CD4-positive, alpha-beta T cell (primary cell): ENCODE measurements at regions of chr2 and their contacts with region 1.

Region 1: GRCh38 chr2:69643602-69644505 is at the start of gene AAK1:
- DNase-seq: peak; percentile 64 to 91 (median 78)
- ATAC-seq: peak; percentile 40
- H3K4me3 ChIP-seq: peak within 1 kb of the TSS; percentile 85
- H3K4me3 Mint-ChIP-seq: peak within 1 kb of the TSS; percentile 99
- H3K27ac ChIP-seq: peak within 1 kb of the TSS; percentile 87 to 90
- H3K27ac Mint-ChIP-seq: peak within 1 kb of the TSS; percentile 95
- H3K4me1 ChIP-seq: peaks cover 56% of the 10 kb centered on the region
- H3K4me1 Mint-ChIP-seq: peaks cover 67% of the 10 kb centered on the region
- H3K27me3 ChIP-seq: no peaks in the 10 kb centered on the region
- H3K27me3 Mint-ChIP-seq: no peaks in the 10 kb centered on the region
- CTCF ChIP-seq: no peak
- total RNA-seq, gene AAK1: 201 to 208 TPM

Region 2: GRCh38 chr2:69306822-69307578 is 336.9 kb before region 1 on chr2:
- CTCF ChIA-PET with region 1: no interaction called
- POLR2A ChIA-PET with region 1: no interaction called
- intact Hi-C with region 1: no loop called
- DNase-seq: peak; percentile 30 to 74 (median 46)
- ATAC-seq: peak; percentile 81
- H3K4me3 ChIP-seq: peak overlapping the region; percentile 56
- H3K4me3 Mint-ChIP-seq: peak overlapping the region; percentile 58
- H3K27ac ChIP-seq: no peak overlapping the region
- H3K27ac Mint-ChIP-seq: no peak overlapping the region
- H3K4me1 ChIP-seq: peaks cover 31% of the 10 kb centered on the region
- H3K4me1 Mint-ChIP-seq: peaks cover 31% of the 10 kb centered on the region
- H3K27me3 ChIP-seq: peaks cover 18 to 29% of the 10 kb centered on the region in 2 experiments
- H3K27me3 Mint-ChIP-seq: peaks cover 32% of the 10 kb centered on the region
- CTCF ChIP-seq: peak; percentile 79

Region 3: DNA sequence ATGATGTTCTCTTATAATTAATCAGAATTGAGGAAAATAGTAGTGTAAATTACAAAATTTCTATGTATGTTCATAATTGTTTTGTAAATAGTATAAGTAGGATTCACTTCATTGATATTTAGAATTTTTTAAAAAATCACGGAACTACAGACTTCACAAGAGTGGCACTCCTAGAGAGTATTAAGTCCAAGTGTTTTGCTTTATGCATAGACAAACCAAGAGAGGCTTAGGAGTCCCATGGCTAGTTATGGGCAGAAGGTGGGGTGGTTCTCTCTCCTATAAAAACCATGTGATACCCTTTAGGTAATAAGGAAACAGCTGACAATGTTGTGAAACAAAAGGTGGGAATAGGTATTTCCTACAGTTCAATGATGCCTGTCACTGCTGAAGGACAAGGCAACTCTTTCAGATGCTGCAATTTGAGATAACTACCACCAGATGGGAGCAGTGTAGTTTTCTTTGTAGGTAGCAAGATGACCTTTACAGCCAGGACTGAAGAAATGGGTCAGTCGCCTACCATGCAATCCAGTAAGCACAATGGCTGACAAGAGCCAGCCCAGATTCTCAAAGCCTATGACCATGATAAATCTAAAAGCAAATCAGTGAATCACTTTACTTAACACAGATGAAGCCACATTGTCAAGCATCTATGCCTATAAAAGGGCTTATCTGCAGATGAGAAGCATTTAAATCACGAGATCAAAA is 84.3 kb before region 1 on chr2:
- CTCF ChIA-PET with region 1: interaction called, 19 read pairs
- POLR2A ChIA-PET with region 1: interaction called, 29 read pairs
- intact Hi-C with region 1: loop called (anchors 2 to 5 kb)
- DNase-seq: peak in 3 of 14 experiments; percentile 51 to 66 (median 65)
- ATAC-seq: peak; percentile 58
- H3K4me3 ChIP-seq: no peak overlapping the region
- H3K4me3 Mint-ChIP-seq: peak overlapping the region; percentile 30
- H3K27ac ChIP-seq: no peak overlapping the region
- H3K27ac Mint-ChIP-seq: peak overlapping the region; percentile 69
- H3K4me1 ChIP-seq: peaks cover 57% of the 10 kb centered on the region
- H3K4me1 Mint-ChIP-seq: peaks cover 91% of the 10 kb centered on the region
- H3K27me3 ChIP-seq: no peaks in the 10 kb centered on the region
- H3K27me3 Mint-ChIP-seq: no peaks in the 10 kb centered on the region
- CTCF ChIP-seq: peak; percentile 75

Region 4: GRCh38 chr2:69601179-69601612 is 42.7 kb before region 1 on chr2:
- CTCF ChIA-PET with region 1: interaction called, 3 read pairs
- POLR2A ChIA-PET with region 1: interaction called, 11 read pairs
- intact Hi-C with region 1: loop called in 1 of 2 experiments (anchors 5 kb)
- DNase-seq: no peak
- ATAC-seq: peak; percentile 58
- H3K4me3 ChIP-seq: no peak overlapping the region
- H3K4me3 Mint-ChIP-seq: peak overlapping the region; percentile 30
- H3K27ac ChIP-seq: no peak overlapping the region
- H3K27ac Mint-ChIP-seq: peak overlapping the region; percentile 78
- H3K4me1 ChIP-seq: peaks cover 50% of the 10 kb centered on the region
- H3K4me1 Mint-ChIP-seq: peaks cover 95% of the 10 kb centered on the region
- H3K27me3 ChIP-seq: no peaks in the 10 kb centered on the region
- H3K27me3 Mint-ChIP-seq: no peaks in the 10 kb centered on the region
- CTCF ChIP-seq: no peak

Region 5: DNA sequence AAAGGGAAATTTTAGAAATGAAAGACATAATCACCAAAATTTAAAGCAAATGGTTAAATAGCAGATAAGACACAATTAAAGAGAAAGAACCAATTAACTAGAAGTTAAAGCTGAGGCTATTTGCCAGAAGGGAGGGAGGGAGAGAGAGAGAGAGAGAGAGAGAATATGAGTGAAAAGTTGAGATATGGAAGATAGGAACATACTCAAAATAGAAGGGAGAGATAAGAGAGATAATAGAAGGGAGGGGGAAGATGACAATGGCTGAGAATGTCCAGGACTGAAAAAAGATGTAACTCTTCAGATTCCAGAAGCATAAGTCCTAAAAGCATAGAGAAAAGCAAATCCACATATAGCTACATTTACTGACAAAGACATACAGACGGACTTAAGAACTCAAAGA is 16.8 kb after region 1 on chr2:
- CTCF ChIA-PET with region 1: no interaction called
- POLR2A ChIA-PET with region 1: interaction called, 23 read pairs
- intact Hi-C with region 1: no loop called
- DNase-seq: no peak
- ATAC-seq: no peak
- H3K4me3 ChIP-seq: no peak overlapping the region
- H3K4me3 Mint-ChIP-seq: no peak overlapping the region
- H3K27ac ChIP-seq: no peak overlapping the region
- H3K27ac Mint-ChIP-seq: no peak overlapping the region
- H3K4me1 ChIP-seq: peaks cover 3% of the 10 kb centered on the region
- H3K4me1 Mint-ChIP-seq: peaks cover 20% of the 10 kb centered on the region
- H3K27me3 ChIP-seq: no peaks in the 10 kb centered on the region
- H3K27me3 Mint-ChIP-seq: no peaks in the 10 kb centered on the region
- CTCF ChIP-seq: no peak

Region 6: DNA sequence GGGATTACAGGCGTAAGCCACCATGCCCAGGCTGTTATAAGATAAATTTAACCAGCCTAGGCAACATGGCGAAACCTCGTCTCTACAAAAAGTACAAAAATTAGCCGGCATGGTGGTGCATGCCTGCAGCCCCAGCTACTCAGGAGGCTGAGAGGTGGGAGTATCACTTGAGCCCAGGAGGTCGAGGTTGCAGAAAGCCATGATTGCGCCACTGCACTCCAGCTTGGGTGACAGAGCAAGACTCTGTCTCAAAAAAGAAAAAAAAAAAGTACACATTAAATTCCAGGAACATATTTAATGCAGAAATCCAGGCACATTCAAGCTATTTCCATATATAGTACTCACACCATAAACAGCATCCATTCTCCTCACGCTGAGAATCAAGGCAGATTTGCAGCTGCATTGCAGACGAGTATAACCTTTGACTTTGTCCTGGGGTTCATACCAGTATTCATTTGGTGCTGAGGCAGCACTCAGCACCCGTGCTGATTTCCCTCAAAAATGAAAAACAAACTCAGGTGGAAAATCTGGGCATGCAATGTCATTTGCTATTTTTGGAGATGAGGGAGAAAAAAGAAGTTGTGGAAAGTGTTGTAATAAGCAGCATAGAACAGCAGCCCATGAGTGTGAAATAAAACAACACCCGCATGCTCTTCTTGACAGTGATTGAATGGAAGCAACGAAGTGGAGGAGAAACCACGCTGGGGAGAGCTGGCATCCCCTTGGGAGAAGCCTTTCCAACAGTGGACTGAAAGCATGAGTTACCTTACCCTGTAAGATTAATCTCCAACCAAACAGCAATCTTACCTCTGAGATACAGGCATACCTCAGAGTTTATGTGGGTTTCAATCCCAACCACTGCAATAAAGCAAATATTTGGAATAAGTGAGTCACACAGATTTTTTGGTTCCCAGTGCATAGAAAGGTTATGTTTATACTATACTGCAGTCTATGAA is 51.3 kb after region 1 on chr2:
- CTCF ChIA-PET with region 1: interaction called, 7 read pairs
- POLR2A ChIA-PET with region 1: interaction called, 214 read pairs
- intact Hi-C with region 1: loop called (anchors 1 to 5 kb)
- DNase-seq: no peak
- ATAC-seq: no peak
- H3K4me3 ChIP-seq: no peak overlapping the region
- H3K4me3 Mint-ChIP-seq: peak overlapping the region; percentile 8
- H3K27ac ChIP-seq: no peak overlapping the region
- H3K27ac Mint-ChIP-seq: peak overlapping the region; percentile 90
- H3K4me1 ChIP-seq: peaks cover 86% of the 10 kb centered on the region
- H3K4me1 Mint-ChIP-seq: peaks cover 97% of the 10 kb centered on the region
- H3K27me3 ChIP-seq: no peaks in the 10 kb centered on the region
- H3K27me3 Mint-ChIP-seq: no peaks in the 10 kb centered on the region
- CTCF ChIP-seq: no peak

Region 7: GRCh38 chr2:69816923-69817542 is 173.2 kb after region 1 on chr2:
- CTCF ChIA-PET with region 1: interaction called, 5 read pairs
- POLR2A ChIA-PET with region 1: no interaction called
- intact Hi-C with region 1: loop called in 1 of 2 experiments (anchors 5 kb)
- DNase-seq: peak; percentile 46 to 89 (median 63)
- ATAC-seq: peak; percentile 95
- H3K4me3 ChIP-seq: no peak overlapping the region
- H3K4me3 Mint-ChIP-seq: no peak overlapping the region
- H3K27ac ChIP-seq: no peak overlapping the region
- H3K27ac Mint-ChIP-seq: no peak overlapping the region
- H3K4me1 ChIP-seq: no peaks in the 10 kb centered on the region
- H3K4me1 Mint-ChIP-seq: peaks cover 5% of the 10 kb centered on the region
- H3K27me3 ChIP-seq: no peaks in the 10 kb centered on the region
- H3K27me3 Mint-ChIP-seq: no peaks in the 10 kb centered on the region
- CTCF ChIP-seq: peak; percentile 87